ENCODE measurements at regions of chr6 and their contacts with region 1.

Region 1: GRCh38 chr6:43396407-43397149 is 27.1 kb upstream of the ZNF318 start:
- DNase-seq: no peak
- ATAC-seq: no peak
- H3K4me3 ChIP-seq: no peak overlapping the region
- H3K4me3 Mint-ChIP-seq: no peak overlapping the region
- H3K27ac ChIP-seq: no peak overlapping the region
- H3K27ac Mint-ChIP-seq: no peak overlapping the region
- H3K4me1 ChIP-seq: peaks cover 7 to 8% of the 10 kb centered on the region in 2 experiments
- H3K4me1 Mint-ChIP-seq: peaks cover 25 to 33% (median 32%) of the 10 kb centered on the region in 3 donors
- H3K27me3 ChIP-seq: no peaks in the 10 kb centered on the region
- H3K27me3 Mint-ChIP-seq: peaks cover 0 to 8% of the 10 kb centered on the region in 2 donors

Region 2: DNA sequence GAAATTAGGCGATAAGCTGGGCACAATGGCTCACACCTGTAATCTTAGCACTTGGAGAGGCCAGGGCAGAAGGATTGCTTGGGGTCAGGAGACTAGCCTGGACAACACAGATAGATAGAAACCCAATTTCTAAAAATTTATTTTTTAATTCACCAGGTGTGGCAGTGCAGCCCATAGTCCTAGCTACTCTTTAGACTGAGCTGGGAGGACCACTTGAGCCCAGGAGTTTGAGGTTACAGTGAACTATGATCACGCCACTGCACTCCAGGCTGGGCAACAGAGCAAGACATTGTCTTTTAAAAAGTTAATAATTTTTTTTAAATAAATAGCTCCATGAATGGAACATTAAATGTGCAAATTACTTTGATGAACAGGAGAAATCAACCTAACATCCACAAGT is 35.3 kb before region 1 on chr6:
- CTCF ChIA-PET with region 1: interaction called, 3 to 10 read pairs
- POLR2A ChIA-PET with region 1: no interaction called
- DNase-seq: no peak
- ATAC-seq: peak in 1 of 4 experiments; percentile 28
- H3K4me3 ChIP-seq: no peak overlapping the region
- H3K4me3 Mint-ChIP-seq: no peak overlapping the region
- H3K27ac ChIP-seq: no peak overlapping the region
- H3K27ac Mint-ChIP-seq: no peak overlapping the region
- H3K4me1 ChIP-seq: peaks cover 0 to 3% of the 10 kb centered on the region in 2 experiments
- H3K4me1 Mint-ChIP-seq: peaks cover 19 to 39% (median 36%) of the 10 kb centered on the region in 3 donors
- H3K27me3 ChIP-seq: no peaks in the 10 kb centered on the region
- H3K27me3 Mint-ChIP-seq: no peaks in the 10 kb centered on the region

Measured in T-cell (primary cell).